H1 (cell line): ENCODE measurements at regions of chr3 and their contacts with region 1.

Region 1: GRCh38 chr3:184469423-184469822 is 89.6 kb downstream of the CHRD start:
- DNase-seq: peak; percentile 70 to 89
- H3K4me3 ChIP-seq: no peak overlapping the region
- H3K27ac ChIP-seq: no peak overlapping the region
- H3K4me1 ChIP-seq: peaks cover 0 to 3% (median 2%) of the 10 kb centered on the region in 4 experiments; a peak in 6 of 7 replicates
- H3K27me3 ChIP-seq: no peaks in the 10 kb centered on the region
- CTCF ChIP-seq: peak; percentile 93 to 96 (median 95)
- EP300 ChIP-seq: no peak
- POLR2A ChIP-seq: no peak
- RAD21 ChIP-seq: peak; percentile 92 to 93

Region 2: DNA sequence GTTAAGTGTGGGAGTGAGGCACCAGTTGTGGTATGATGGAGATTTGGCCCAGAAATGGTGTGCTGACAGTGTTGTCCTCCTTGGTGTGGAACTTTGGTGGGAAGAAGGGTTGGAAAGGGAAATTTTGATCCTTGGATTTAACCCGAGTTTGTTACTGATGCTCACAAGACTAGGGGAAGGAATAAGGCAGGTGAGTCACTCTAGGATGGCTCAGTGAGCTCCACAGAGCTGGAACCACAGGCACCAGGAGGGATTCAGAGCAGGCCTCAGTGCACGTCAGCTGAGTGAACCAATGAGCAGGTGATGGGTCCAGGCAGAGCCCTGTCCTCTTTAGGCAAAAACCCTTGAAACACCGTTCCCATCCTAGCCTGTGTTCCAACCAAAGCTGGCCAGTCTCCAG is 78.2 kb before region 1 on chr3:
- CTCF ChIA-PET with region 1: interaction called, 37 read pairs
- POLR2A ChIA-PET with region 1: no interaction called
- DNase-seq: no peak
- H3K4me3 ChIP-seq: no peak overlapping the region
- H3K27ac ChIP-seq: no peak overlapping the region
- H3K4me1 ChIP-seq: peaks cover 0 to 3% (median 0%) of the 10 kb centered on the region in 4 experiments; a peak in 2 of 7 replicates
- H3K27me3 ChIP-seq: no peaks in the 10 kb centered on the region; a peak in 3 of 7 replicates
- CTCF ChIP-seq: no peak
- EP300 ChIP-seq: no peak
- POLR2A ChIP-seq: no peak
- RAD21 ChIP-seq: no peak

Region 3: DNA sequence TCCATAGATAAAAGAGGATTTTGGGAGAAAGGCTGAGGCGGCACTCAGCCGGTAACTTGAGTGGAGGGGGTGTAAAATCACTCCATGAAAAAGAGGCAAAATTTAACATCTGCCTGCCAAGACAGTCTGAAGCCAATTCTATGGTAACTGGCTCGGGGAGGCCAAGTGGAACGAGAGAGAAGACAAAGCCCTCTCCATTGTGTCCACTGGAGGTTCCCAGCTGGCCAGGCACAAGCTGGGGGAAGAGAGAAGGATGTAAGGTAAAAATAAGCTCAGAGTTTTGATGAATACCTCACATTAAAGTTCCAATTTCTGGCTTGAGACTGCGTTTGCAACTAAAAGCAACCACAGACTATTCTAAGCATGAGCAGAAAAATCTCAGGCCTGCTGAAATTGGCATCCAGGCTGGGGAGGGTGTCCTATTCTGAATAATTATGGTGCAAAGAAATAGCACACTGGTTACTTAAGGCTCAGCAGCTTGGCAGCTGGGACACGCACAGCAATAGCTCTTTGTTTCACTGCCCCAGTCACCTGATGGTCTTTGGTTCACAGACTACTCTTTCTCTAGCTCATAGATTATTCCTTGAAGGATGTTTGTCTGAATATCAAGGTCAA is 40.8 kb before region 1 on chr3:
- CTCF ChIA-PET with region 1: interaction called, 22 read pairs
- POLR2A ChIA-PET with region 1: no interaction called
- DNase-seq: no peak
- H3K4me3 ChIP-seq: no peak overlapping the region
- H3K27ac ChIP-seq: no peak overlapping the region
- H3K4me1 ChIP-seq: no peaks in the 10 kb centered on the region
- H3K27me3 ChIP-seq: no peaks in the 10 kb centered on the region
- CTCF ChIP-seq: no peak
- EP300 ChIP-seq: no peak
- POLR2A ChIP-seq: no peak
- RAD21 ChIP-seq: no peak

Region 4: DNA sequence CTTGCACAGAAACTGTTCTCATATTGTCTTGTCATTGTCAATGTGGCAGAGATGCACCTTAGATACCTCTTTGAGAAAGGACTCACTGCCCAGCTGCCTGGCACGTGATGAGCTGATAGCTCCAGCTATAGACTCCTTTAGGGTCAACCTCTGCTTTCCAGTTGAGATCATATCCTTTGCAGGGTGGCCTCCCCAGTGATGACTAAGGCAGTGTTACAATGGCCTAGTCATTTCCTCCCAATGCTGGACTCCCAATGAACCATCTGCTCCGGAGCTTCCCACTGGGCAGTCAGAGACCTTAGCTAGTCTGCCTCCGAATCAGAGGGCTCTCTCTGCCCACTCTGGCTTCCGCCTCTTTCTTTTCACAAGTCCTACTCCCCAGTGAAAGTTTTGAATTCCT is 10.1 kb before region 1 on chr3:
- CTCF ChIA-PET with region 1: interaction called, 63 read pairs
- POLR2A ChIA-PET with region 1: no interaction called
- DNase-seq: no peak
- H3K4me3 ChIP-seq: no peak overlapping the region
- H3K27ac ChIP-seq: no peak overlapping the region
- H3K4me1 ChIP-seq: no peaks in the 10 kb centered on the region
- H3K27me3 ChIP-seq: no peaks in the 10 kb centered on the region
- CTCF ChIP-seq: no peak
- EP300 ChIP-seq: no peak
- POLR2A ChIP-seq: no peak
- RAD21 ChIP-seq: no peak

Region 5: DNA sequence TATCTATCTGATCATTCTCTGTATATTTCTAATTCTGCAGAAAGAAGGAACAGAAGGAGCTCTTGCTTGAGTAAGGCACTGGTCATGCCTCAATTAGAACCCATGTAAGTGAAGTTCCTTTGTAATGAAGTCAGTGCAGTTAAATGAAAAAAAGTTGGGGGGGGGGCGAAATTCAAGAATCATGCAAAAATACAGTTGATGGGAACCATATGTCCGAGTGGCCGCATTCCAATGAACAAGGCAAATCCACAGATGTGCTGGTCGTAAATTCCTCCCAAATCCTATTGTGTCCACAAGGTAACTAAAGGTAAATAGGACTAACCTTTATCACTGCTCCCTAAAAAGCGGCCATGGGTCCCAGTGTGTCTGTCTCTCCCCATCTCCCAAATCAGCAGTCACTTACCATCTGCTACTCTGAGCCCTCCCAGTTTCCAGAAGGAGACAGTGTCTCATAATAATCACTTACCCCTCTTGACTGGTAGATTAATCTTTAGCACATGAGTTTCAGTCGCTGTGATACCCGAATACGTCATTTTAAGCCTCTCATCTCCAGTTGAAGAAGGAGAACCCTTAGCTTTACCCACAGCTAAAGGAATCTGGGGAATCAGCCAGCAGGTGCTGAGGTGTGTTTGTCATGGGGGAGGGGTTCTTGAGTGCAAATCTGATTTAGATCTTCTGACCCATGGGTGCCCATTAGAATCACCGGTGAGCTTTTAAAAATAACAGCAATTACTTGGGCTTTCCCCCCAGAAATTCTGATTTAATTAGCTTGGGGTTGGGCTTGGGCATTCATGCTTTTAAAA is 35.9 kb after region 1 on chr3:
- CTCF ChIA-PET with region 1: interaction called, 16 read pairs
- POLR2A ChIA-PET with region 1: no interaction called
- DNase-seq: no peak
- H3K4me3 ChIP-seq: no peak overlapping the region
- H3K27ac ChIP-seq: no peak overlapping the region
- H3K4me1 ChIP-seq: peaks cover 2 to 5% (median 2%) of the 10 kb centered on the region in 4 experiments; a peak in 6 of 7 replicates
- H3K27me3 ChIP-seq: no peaks in the 10 kb centered on the region; a peak in 2 of 7 replicates
- CTCF ChIP-seq: no peak
- EP300 ChIP-seq: no peak
- POLR2A ChIP-seq: no peak
- RAD21 ChIP-seq: no peak

Region 6: DNA sequence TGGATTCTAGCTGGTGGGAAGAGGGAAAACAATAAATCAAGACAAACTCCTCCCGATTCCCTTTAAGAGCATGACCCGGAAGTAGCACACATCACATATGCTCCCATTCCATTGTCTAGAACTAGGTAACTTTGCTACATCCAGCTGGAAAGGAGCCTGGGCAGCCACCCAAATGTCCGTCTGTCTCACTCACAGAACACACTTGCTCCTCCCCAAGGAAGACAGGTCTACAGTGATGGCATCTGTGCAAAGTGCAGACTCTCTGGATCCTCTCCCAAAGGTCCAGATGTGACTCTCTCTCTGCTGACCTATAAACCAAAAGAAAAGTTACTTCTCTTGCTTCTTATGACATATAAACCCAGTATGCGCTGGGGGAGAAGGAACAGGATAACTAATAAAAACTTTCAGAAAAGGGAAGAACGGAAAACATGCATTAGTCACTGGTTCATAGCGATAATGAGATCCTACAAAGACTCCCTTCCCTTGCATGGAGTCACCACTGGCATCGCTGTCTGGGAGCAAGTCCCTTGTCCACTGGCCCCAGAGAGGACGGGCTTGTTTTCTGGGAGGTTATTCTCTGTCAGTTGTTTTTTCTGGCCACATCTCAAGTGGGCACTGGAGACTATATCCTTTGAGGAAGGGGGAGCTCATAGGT is 62.3 kb after region 1 on chr3:
- CTCF ChIA-PET with region 1: interaction called, 150 read pairs
- POLR2A ChIA-PET with region 1: no interaction called
- DNase-seq: no peak
- H3K4me3 ChIP-seq: no peak overlapping the region
- H3K27ac ChIP-seq: no peak overlapping the region
- H3K4me1 ChIP-seq: peaks cover 0 to 4% (median under 1%) of the 10 kb centered on the region in 4 experiments; a peak in 3 of 7 replicates
- H3K27me3 ChIP-seq: no peaks in the 10 kb centered on the region
- CTCF ChIP-seq: no peak
- EP300 ChIP-seq: no peak
- POLR2A ChIP-seq: no peak
- RAD21 ChIP-seq: no peak

Region 7: GRCh38 chr3:184574515-184575417 is 105.3 kb after region 1 on chr3:
- CTCF ChIA-PET with region 1: no interaction called
- POLR2A ChIA-PET with region 1: no interaction called
- DNase-seq: peak in 1 of 2 experiments; percentile 82
- H3K4me3 ChIP-seq: peak overlapping the region in 3 of 4 experiments; percentile 10 to 40 (median 38); a peak in 4 of 8 replicates
- H3K27ac ChIP-seq: no peak overlapping the region
- H3K4me1 ChIP-seq: peaks cover 0 to 30% (median 20%) of the 10 kb centered on the region in 4 experiments; a peak in 6 of 7 replicates
- H3K27me3 ChIP-seq: peaks cover 11 to 40% (median 30%) of the 10 kb centered on the region in 4 experiments
- CTCF ChIP-seq: peak in 1 of 3 experiments; percentile 45; a peak in 1 of 4 replicates
- EP300 ChIP-seq: no peak; a peak in 1 of 3 replicates
- POLR2A ChIP-seq: no peak
- RAD21 ChIP-seq: peak; percentile 6 to 7; a peak in 2 of 4 replicates